ENCODE measurements at regions of chr12 and their contacts with region 1.

Region 1: DNA sequence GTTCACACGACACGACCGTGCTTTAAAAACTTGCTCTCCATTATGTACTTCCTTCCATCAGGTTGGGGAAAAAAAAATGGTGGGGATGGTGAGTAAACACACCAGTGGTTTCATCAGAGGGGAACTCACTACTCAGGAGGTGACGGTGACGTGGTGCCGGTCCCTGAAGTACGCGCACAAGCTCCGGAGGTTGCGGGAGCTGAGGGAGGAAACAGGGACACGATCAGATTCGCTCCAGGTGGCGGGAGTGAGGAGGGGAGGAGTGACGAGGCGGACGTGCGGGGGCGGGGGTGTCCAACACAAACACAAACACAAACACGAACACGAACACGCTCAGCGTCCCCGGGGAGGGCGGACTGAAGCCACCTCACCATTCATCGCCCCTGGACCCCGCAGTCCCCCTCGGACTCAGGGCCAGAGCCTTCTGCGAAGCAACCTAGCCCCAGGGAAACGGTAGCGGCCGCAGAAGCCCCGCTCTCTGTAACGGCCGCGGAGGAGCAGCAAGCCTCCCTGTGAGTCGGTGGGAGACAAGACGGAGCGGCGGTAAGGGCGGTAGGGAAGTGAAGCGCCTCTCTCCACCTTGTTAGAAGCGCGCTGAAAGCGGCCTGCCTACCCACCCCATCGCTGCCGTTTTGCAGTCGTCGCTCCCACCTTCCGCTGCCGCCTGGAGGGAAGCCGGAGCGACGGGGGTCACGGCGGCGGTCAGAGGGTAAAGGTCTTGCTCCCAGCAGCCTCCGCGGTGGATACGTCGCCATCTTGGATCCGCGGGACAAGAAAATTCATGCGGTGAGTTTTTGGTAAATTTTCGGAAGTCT is at the start of gene CNOT2:
- DNase-seq: peak; percentile 94
- H3K4me3 Mint-ChIP-seq: peak within 1 kb of the TSS; percentile 99
- H3K27ac Mint-ChIP-seq: peak within 1 kb of the TSS; percentile 100
- H3K4me1 Mint-ChIP-seq: peaks cover 48% of the 10 kb centered on the region
- H3K27me3 Mint-ChIP-seq: no peaks in the 10 kb centered on the region
- total RNA-seq, gene CNOT2: 66.0 to 66.2 TPM

Region 2: GRCh38 chr12:69239352-69239921 is 1003.5 kb before region 1 on chr12 and contains the start of gene CPSF6:
- CTCF ChIA-PET with region 1: no interaction called
- intact Hi-C with region 1: loop called (anchors 2 kb)
- DNase-seq: peak; percentile 97
- H3K4me3 Mint-ChIP-seq: peak within 1 kb of the TSS; percentile 91
- H3K27ac Mint-ChIP-seq: peak within 1 kb of the TSS; percentile 98
- H3K4me1 Mint-ChIP-seq: peaks cover 47% of the 10 kb centered on the region
- H3K27me3 Mint-ChIP-seq: no peaks in the 10 kb centered on the region
- total RNA-seq, gene CPSF6: 73.7 to 75.7 TPM

Region 3: GRCh38 chr12:69585189-69586062 is 657.5 kb before region 1 on chr12 and contains the start of gene CCT2:
- CTCF ChIA-PET with region 1: no interaction called
- intact Hi-C with region 1: loop called (anchors 1 kb)
- DNase-seq: peak; percentile 97
- H3K4me3 Mint-ChIP-seq: peak within 1 kb of the TSS; percentile 86
- H3K27ac Mint-ChIP-seq: peak within 1 kb of the TSS; percentile 92
- H3K4me1 Mint-ChIP-seq: peaks cover 27% of the 10 kb centered on the region
- H3K27me3 Mint-ChIP-seq: no peaks in the 10 kb centered on the region
- total RNA-seq, gene CCT2: 268 to 280 TPM

Region 4: GRCh38 chr12:70267550-70267949 is 24.6 kb after region 1 on chr12:
- CTCF ChIA-PET with region 1: no interaction called
- intact Hi-C with region 1: loop called (anchors 1 kb)
- DNase-seq: peak; percentile 5
- H3K4me3 Mint-ChIP-seq: no peak overlapping the region
- H3K27ac Mint-ChIP-seq: peak overlapping the region; percentile 74
- H3K4me1 Mint-ChIP-seq: peaks cover 75% of the 10 kb centered on the region
- H3K27me3 Mint-ChIP-seq: no peaks in the 10 kb centered on the region

Region 5: GRCh38 chr12:70379846-70380245 is 136.9 kb after region 1 on chr12:
- CTCF ChIA-PET with region 1: no interaction called
- intact Hi-C with region 1: loop called (anchors 1 kb)
- DNase-seq: peak; percentile 46
- H3K4me3 Mint-ChIP-seq: no peak overlapping the region
- H3K27ac Mint-ChIP-seq: peak overlapping the region; percentile 27
- H3K4me1 Mint-ChIP-seq: peaks cover 13% of the 10 kb centered on the region
- H3K27me3 Mint-ChIP-seq: no peaks in the 10 kb centered on the region

Region 6: DNA sequence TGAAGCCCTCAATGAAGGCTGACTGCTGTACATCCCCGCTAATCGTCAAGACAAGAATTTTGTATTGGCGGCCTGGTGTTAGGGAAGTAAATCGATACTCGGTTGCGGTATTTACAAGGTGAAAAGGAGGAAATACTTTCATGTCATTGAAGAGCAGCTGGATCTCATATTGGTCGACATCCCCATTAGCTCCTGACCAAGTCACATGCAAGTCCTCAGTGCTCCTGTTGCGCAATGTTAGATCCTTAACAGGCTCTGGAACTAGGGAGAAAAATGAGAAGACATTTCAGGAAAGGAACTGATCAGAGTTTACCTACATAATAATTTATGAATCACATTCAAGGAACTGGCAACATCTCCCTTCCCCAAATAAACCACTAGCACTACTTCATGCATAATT is 328.1 kb after region 1 on chr12:
- CTCF ChIA-PET with region 1: no interaction called
- intact Hi-C with region 1: no loop called
- DNase-seq: no peak
- H3K4me3 Mint-ChIP-seq: no peak overlapping the region
- H3K27ac Mint-ChIP-seq: no peak overlapping the region
- H3K4me1 Mint-ChIP-seq: no peaks in the 10 kb centered on the region
- H3K27me3 Mint-ChIP-seq: peaks cover 9% of the 10 kb centered on the region

Region 7: GRCh38 chr12:71838676-71839075 is 1595.8 kb after region 1 on chr12:
- CTCF ChIA-PET with region 1: no interaction called
- intact Hi-C with region 1: loop called (anchors 5 kb)
- DNase-seq: no peak
- H3K4me3 Mint-ChIP-seq: peak overlapping the region; percentile 94
- H3K27ac Mint-ChIP-seq: peak overlapping the region; percentile 98
- H3K4me1 Mint-ChIP-seq: peaks cover 54% of the 10 kb centered on the region
- H3K27me3 Mint-ChIP-seq: no peaks in the 10 kb centered on the region

Measured in activated naive CD4-positive, alpha-beta T cell treated with anti-CD3 and anti-CD28 coated beads for 36 hours (primary cell).